ENCODE measurements at regions of chr4 and their contacts with region 1.

Region 1: GRCh38 chr4:94621491-94622080 is 136.2 kb upstream of the BMPR1B start:
- DNase-seq: peak in 3 of 9 experiments; percentile 7 to 51 (median 38)
- ATAC-seq: no peak
- H3K4me3 ChIP-seq: no peak overlapping the region
- H3K4me3 Mint-ChIP-seq: no peak overlapping the region
- H3K27ac ChIP-seq: no peak overlapping the region
- H3K27ac Mint-ChIP-seq: no peak overlapping the region
- H3K4me1 ChIP-seq: no peaks in the 10 kb centered on the region
- H3K4me1 Mint-ChIP-seq: no peaks in the 10 kb centered on the region
- H3K27me3 ChIP-seq: no peaks in the 10 kb centered on the region
- H3K27me3 Mint-ChIP-seq: no peaks in the 10 kb centered on the region
- CTCF ChIP-seq: peak; percentile 84

Region 2: GRCh38 chr4:94635177-94635576 is 13.6 kb after region 1 on chr4:
- CTCF ChIA-PET with region 1: interaction called, 11 read pairs
- POLR2A ChIA-PET with region 1: no interaction called
- intact Hi-C with region 1: no loop called
- DNase-seq: no peak
- ATAC-seq: no peak
- H3K4me3 ChIP-seq: no peak overlapping the region
- H3K4me3 Mint-ChIP-seq: no peak overlapping the region
- H3K27ac ChIP-seq: no peak overlapping the region
- H3K27ac Mint-ChIP-seq: no peak overlapping the region
- H3K4me1 ChIP-seq: no peaks in the 10 kb centered on the region
- H3K4me1 Mint-ChIP-seq: no peaks in the 10 kb centered on the region
- H3K27me3 ChIP-seq: no peaks in the 10 kb centered on the region
- H3K27me3 Mint-ChIP-seq: no peaks in the 10 kb centered on the region
- CTCF ChIP-seq: no peak

Region 3: GRCh38 chr4:95095348-95095974 is 473.9 kb after region 1 on chr4:
- CTCF ChIA-PET with region 1: no interaction called
- POLR2A ChIA-PET with region 1: no interaction called
- intact Hi-C with region 1: loop called (anchors 2 to 10 kb)
- DNase-seq: peak in 1 of 9 experiments; percentile 2
- ATAC-seq: no peak
- H3K4me3 ChIP-seq: no peak overlapping the region
- H3K4me3 Mint-ChIP-seq: no peak overlapping the region
- H3K27ac ChIP-seq: no peak overlapping the region
- H3K27ac Mint-ChIP-seq: no peak overlapping the region
- H3K4me1 ChIP-seq: no peaks in the 10 kb centered on the region
- H3K4me1 Mint-ChIP-seq: no peaks in the 10 kb centered on the region
- H3K27me3 ChIP-seq: no peaks in the 10 kb centered on the region
- H3K27me3 Mint-ChIP-seq: no peaks in the 10 kb centered on the region
- CTCF ChIP-seq: no peak

Region 4: DNA sequence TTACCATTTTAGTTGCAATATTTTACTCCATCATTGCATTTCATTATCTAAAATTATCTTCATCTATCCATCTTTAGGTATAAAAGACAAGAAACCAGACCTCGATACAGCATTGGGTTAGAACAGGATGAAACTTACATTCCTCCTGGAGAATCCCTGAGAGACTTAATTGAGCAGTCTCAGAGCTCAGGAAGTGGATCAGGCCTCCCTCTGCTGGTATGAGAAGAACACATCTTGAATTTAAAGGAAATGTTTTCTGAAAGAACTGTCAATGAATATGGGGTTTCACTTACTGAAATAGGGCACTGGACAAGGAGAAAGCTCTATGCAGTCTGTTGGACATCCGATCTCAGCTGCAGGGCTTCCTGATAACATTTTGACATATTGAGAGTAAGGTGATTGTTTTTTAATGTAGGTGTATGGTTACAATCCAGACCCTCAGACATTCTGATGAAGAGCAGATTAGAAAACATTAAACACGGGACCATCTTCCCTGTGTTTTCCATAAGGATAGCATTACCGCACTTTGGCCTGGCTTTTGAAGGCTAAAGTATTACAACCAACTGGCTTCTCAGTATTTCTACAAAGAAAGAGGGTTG is 503.4 kb after region 1 on chr4:
- CTCF ChIA-PET with region 1: no interaction called
- POLR2A ChIA-PET with region 1: no interaction called
- intact Hi-C with region 1: loop called in 1 of 2 experiments (anchors 5 kb)
- DNase-seq: peak in 1 of 9 experiments; percentile 7
- ATAC-seq: no peak
- H3K4me3 ChIP-seq: no peak overlapping the region
- H3K4me3 Mint-ChIP-seq: no peak overlapping the region
- H3K27ac ChIP-seq: no peak overlapping the region
- H3K27ac Mint-ChIP-seq: no peak overlapping the region
- H3K4me1 ChIP-seq: no peaks in the 10 kb centered on the region
- H3K4me1 Mint-ChIP-seq: no peaks in the 10 kb centered on the region
- H3K27me3 ChIP-seq: no peaks in the 10 kb centered on the region
- H3K27me3 Mint-ChIP-seq: no peaks in the 10 kb centered on the region
- CTCF ChIP-seq: no peak

Region 5: DNA sequence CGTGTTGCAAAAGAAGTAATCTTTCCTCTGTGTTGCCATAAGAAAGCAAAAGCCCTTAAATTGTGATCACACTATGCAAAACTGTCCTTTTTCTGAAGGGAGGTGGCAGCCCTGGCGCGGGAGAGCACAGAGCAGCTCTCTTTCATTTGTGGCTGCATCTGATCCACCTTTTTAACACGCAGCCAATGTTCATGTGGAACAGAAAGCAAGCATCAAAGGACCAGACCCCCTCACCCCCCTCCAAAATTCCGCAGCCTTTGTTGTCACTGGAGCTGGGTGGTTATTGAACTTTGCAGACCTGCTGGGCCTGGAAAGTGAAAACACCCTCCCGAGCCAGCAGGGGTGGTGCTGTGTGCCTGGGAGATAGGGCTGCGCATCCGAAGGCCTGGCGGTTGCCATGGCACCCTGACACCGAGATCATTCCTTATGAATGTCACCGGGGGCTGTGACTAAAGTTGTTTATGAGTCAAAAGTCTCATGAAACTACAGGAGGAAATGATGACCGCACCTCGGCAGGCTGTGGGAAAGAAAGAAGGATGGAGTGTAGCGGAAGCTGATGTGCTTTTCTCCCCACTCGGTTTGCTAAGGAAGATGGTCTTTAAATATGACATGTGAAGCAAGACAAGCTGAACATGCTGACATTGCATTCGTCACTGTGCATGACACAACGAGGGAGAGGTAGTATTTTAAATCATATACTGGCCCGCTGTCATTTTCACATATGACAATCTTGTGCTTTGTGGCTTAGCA is 559.8 kb after region 1 on chr4:
- CTCF ChIA-PET with region 1: no interaction called
- POLR2A ChIA-PET with region 1: no interaction called
- intact Hi-C with region 1: no loop called
- DNase-seq: peak in 1 of 9 experiments; percentile 36
- ATAC-seq: no peak
- H3K4me3 ChIP-seq: no peak overlapping the region
- H3K4me3 Mint-ChIP-seq: no peak overlapping the region
- H3K27ac ChIP-seq: no peak overlapping the region
- H3K27ac Mint-ChIP-seq: no peak overlapping the region
- H3K4me1 ChIP-seq: no peaks in the 10 kb centered on the region
- H3K4me1 Mint-ChIP-seq: peaks cover 2% of the 10 kb centered on the region
- H3K27me3 ChIP-seq: no peaks in the 10 kb centered on the region
- H3K27me3 Mint-ChIP-seq: peaks cover 3% of the 10 kb centered on the region
- CTCF ChIP-seq: no peak